ENCODE measurements at regions of chrX and their contacts with region 1.

Region 1: GRCh38 chrX:47637546-47638195 is 7.9 kb upstream of the CFP start:
- DNase-seq: peak; percentile 39
- H3K4me3 Mint-ChIP-seq: peak overlapping the region; percentile 52
- H3K27ac Mint-ChIP-seq: peak overlapping the region; percentile 44
- H3K4me1 Mint-ChIP-seq: peaks cover 22% of the 10 kb centered on the region
- H3K27me3 Mint-ChIP-seq: no peaks in the 10 kb centered on the region

Region 2: DNA sequence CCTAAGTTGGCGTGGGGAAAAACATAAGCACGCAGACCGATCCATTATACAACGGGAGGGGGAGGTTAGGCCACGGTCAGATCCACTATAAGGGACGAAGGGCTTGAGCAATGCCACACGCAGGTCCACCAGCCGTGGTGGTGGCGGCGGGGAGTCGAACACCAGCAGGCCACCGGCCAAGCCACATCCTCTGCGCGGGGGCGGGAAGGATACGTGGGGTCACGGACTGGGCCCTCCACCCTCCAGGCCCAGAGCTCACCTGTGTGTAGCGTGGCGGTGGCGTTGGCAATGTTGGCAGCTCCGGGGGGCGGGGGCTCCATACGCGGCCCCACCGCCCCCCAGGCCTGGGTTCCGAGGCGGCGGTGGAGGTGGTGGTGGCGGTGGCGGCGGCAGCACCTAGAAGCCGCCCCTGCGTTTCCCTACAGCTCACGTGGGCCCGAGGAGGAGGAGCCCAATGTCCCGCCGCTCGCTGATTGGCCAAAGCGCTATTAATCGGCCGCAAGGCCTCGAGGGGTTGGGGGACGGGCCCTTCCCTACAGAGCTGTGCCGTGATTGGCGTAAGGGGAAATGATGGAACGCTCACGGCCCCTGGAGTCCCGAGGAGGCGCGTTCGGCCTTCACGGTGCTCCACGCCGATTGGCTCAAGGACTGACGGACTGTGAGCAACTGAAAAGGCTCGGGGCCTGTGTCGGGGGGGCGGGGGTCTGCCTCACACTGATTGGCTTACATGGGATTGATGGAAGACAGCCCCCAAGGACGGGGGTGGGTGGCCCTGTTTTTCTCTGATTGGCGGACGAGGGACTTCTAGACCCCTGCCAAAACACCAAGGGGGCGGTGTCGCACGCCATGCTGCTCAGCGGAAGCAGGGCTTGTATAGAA is 12.7 kb after region 1 on chrX and contains the start of gene ELK1:
- CTCF ChIA-PET with region 1: interaction called, 3 read pairs
- POLR2A ChIA-PET with region 1: interaction called, 15 read pairs
- DNase-seq: peak; percentile 92
- H3K4me3 Mint-ChIP-seq: peak within 1 kb of the TSS; percentile 94
- H3K27ac Mint-ChIP-seq: peak within 1 kb of the TSS; percentile 91
- H3K4me1 Mint-ChIP-seq: peaks cover 58% of the 10 kb centered on the region
- H3K27me3 Mint-ChIP-seq: no peaks in the 10 kb centered on the region
- total RNA-seq, gene ELK1: 68.9 to 74.9 TPM